ENCODE measurements at regions of chr18 and their contacts with region 1.

Region 1: DNA sequence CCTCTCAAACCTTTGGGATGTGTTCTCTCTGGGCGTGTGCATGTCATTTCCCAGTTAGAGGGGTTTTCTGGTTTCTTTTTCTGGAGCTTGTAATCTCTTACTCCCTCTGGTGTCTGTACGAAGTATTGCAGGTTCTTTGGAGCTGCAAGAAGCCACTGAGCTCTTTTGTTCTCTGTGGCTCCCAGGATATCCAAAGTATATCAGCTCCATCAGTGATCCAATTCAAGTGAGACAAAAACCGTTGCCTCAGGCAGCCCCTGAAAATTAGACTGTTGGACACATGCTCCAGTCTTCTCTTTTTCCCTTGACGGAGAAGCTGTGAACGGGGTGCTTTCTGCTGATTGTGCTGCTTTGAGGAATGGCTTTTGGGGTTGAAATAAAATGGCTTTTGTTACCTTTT is 59.0 kb upstream of the LDLRAD4 start:
- DNase-seq: peak in 7 of 9 donors; percentile 32 to 66 (median 56)
- ATAC-seq: peak; percentile 79
- H3K4me3 ChIP-seq: no peak overlapping the region
- H3K4me3 Mint-ChIP-seq: peak overlapping the region in 4 of 10 donors; percentile 1 to 52 (median 8)
- H3K27ac ChIP-seq: no peak overlapping the region
- H3K27ac Mint-ChIP-seq: peak overlapping the region in 1 of 9 donors; percentile 43
- H3K4me1 ChIP-seq: no peaks in the 10 kb centered on the region
- H3K4me1 Mint-ChIP-seq: peaks cover 0 to 5% (median 3%) of the 10 kb centered on the region in 7 donors
- H3K27me3 ChIP-seq: no peaks in the 10 kb centered on the region
- H3K27me3 Mint-ChIP-seq: peaks cover 0 to 18% (median 4%) of the 10 kb centered on the region in 5 donors

Region 2: DNA sequence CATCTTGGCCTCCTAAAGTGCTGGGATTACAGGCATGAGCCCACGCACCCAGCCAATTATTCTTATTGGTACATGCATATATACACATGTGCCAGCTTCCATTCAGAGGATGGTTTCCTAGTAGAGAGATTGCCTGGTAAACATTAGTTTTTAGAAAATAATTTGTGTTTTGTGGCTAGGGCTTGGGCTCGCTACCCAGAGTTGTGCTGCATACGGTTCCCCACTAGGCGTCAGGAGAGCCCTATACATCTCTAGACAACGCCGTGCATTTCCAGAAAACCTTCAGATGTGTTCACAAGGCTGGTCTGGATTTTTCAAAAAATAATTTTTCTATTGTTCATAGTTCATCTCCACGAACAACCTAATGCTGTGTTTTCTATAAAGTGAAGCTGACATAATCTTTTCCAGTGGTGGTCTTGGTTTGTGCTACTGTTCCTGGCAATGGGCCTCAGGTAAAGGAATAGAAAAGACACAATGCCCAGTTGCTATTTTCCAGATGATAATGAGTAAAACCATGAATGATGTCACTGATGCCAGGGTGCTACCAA is 767.9 kb before region 1 on chr18:
- CTCF ChIA-PET with region 1: interaction called, 10 read pairs
- POLR2A ChIA-PET with region 1: no interaction called
- intact Hi-C with region 1: loop called (anchors 1 to 2 kb)
- DNase-seq: peak in 8 of 9 donors; percentile 16 to 59 (median 44)
- ATAC-seq: peak; percentile 96
- H3K4me3 ChIP-seq: no peak overlapping the region
- H3K4me3 Mint-ChIP-seq: no peak overlapping the region
- H3K27ac ChIP-seq: no peak overlapping the region
- H3K27ac Mint-ChIP-seq: no peak overlapping the region
- H3K4me1 ChIP-seq: no peaks in the 10 kb centered on the region
- H3K4me1 Mint-ChIP-seq: peaks cover 0 to 3% (median 0%) of the 10 kb centered on the region in 7 donors
- H3K27me3 ChIP-seq: no peaks in the 10 kb centered on the region
- H3K27me3 Mint-ChIP-seq: peaks cover 0 to 9% (median 5%) of the 10 kb centered on the region in 5 donors

Region 3: DNA sequence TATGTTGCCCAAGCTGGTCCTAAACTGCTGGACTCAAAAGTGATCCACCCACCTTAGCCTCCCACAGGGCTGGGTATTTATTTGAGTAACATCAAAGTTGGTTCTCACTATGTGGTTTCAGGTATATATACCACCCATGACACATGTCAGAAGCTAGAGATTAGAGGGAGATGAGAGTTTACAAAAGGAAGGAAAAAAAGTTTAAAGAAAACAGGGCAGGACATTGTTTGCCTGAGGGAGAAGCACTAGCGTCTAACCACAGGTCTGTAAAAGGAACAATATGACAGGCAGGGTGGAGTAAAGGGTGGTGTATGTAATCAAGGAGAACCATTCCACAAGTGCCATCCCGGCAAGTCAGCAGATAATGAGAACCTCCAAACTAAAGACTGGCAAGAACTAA is 465.5 kb before region 1 on chr18:
- CTCF ChIA-PET with region 1: no interaction called
- POLR2A ChIA-PET with region 1: no interaction called
- intact Hi-C with region 1: no loop called
- DNase-seq: no peak
- ATAC-seq: no peak
- H3K4me3 ChIP-seq: no peak overlapping the region
- H3K4me3 Mint-ChIP-seq: no peak overlapping the region
- H3K27ac ChIP-seq: no peak overlapping the region
- H3K27ac Mint-ChIP-seq: peak overlapping the region in 1 of 9 donors; percentile 54
- H3K4me1 ChIP-seq: no peaks in the 10 kb centered on the region
- H3K4me1 Mint-ChIP-seq: peaks cover 0 to 29% (median 5%) of the 10 kb centered on the region in 7 donors
- H3K27me3 ChIP-seq: no peaks in the 10 kb centered on the region
- H3K27me3 Mint-ChIP-seq: no peaks in the 10 kb centered on the region

Region 4: GRCh38 chr18:12744103-12744502 is 415.5 kb before region 1 on chr18:
- CTCF ChIA-PET with region 1: interaction called, 3 read pairs
- POLR2A ChIA-PET with region 1: no interaction called
- intact Hi-C with region 1: loop called in 1 of 2 experiments (anchors 1 kb)
- DNase-seq: peak in 5 of 9 donors; percentile 13 to 38 (median 22)
- ATAC-seq: peak; percentile 68
- H3K4me3 ChIP-seq: no peak overlapping the region
- H3K4me3 Mint-ChIP-seq: no peak overlapping the region
- H3K27ac ChIP-seq: no peak overlapping the region
- H3K27ac Mint-ChIP-seq: no peak overlapping the region
- H3K4me1 ChIP-seq: no peaks in the 10 kb centered on the region
- H3K4me1 Mint-ChIP-seq: peaks cover 0 to 6% (median 5%) of the 10 kb centered on the region in 7 donors
- H3K27me3 ChIP-seq: no peaks in the 10 kb centered on the region
- H3K27me3 Mint-ChIP-seq: no peaks in the 10 kb centered on the region

Region 5: DNA sequence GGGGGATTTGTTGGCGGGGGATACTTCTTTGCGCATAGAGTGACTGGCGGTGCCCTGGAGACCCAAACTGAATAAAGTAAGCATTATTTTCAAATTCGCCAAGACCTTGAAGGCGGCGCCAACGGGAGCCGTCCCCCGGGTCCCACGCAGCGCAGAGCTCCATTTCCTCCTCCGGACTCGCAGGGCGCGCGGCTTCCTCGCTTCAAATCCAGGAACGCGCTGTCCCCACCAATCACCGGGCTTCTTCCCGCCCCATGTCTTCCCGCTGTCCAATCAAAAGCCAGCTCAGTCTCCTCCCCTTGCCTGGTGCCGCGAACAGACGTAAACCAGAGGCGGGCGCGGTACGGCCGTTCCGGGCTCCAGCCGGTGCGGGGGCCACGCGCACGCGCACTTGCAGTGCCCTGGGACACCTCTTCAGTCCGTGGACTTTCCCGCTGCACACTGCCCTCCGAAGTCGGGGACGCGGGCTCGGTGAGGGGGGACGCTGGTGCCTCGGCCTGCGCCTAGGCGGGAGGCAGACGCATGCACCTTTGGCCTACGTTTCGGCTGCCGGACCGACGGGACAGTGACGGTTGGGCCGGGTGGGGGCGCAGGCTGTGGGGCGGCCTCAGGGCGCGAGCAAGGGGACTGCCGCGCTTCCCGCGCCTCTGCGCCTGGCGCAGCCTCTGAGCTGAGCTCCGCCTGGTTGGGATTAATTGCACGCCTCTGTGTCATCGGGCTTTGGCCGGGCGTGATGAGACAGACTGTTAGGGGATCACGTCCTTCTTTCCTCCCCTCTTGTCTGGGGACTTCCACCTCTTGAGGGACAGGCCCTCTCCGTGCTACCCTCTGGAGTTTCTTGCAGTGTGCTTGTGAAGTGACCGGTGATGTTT is 168.4 kb before region 1 on chr18 and contains the start of gene CEP192:
- CTCF ChIA-PET with region 1: no interaction called
- POLR2A ChIA-PET with region 1: no interaction called
- intact Hi-C with region 1: loop called (anchors 1 to 5 kb)
- DNase-seq: peak; percentile 90 to 99 (median 97)
- ATAC-seq: peak; percentile 99
- H3K4me3 ChIP-seq: peak within 1 kb of the TSS; percentile 85
- H3K4me3 Mint-ChIP-seq: peak within 1 kb of the TSS in 9 of 10 donors; percentile 90 to 99 (median 98)
- H3K27ac ChIP-seq: peak within 1 kb of the TSS; percentile 82
- H3K27ac Mint-ChIP-seq: peak within 1 kb of the TSS; percentile 88 to 97 (median 93)
- H3K4me1 ChIP-seq: peaks cover 27 to 29% of the 10 kb centered on the region in 2 donors
- H3K4me1 Mint-ChIP-seq: peaks cover 10 to 29% (median 20%) of the 10 kb centered on the region in 7 donors
- H3K27me3 ChIP-seq: no peaks in the 10 kb centered on the region
- H3K27me3 Mint-ChIP-seq: peaks cover 0 to 1% (median 0%) of the 10 kb centered on the region in 5 donors
- total RNA-seq, gene CEP192: 30.9 to 45.0 (median 39.7) TPM

Region 6: DNA sequence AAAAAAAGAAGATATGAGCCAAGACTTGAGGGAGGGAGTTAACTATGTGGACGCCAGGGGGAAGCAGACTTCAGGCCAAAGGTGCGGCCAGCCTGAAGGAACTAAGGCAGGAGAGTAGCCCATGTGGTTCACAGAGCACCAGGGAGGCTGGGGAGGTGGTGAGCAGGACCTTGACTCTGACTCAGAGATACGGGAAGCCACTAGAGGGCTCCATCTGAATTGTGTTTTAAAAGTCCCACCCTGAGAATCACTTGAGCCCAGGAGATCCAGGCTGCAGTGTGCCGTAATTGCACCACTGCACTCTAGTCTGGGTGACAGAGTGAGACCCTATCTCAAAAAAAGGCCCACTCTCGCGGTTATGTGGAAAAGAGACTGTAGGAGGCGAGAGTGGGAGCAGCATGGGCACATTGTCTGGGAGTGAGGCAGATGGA is 156.1 kb before region 1 on chr18:
- CTCF ChIA-PET with region 1: no interaction called
- POLR2A ChIA-PET with region 1: no interaction called
- intact Hi-C with region 1: loop called in 1 of 2 experiments (anchors 1 kb)
- DNase-seq: peak in 2 of 9 donors; percentile 1 to 10
- ATAC-seq: peak; percentile 36
- H3K4me3 ChIP-seq: no peak overlapping the region
- H3K4me3 Mint-ChIP-seq: no peak overlapping the region
- H3K27ac ChIP-seq: no peak overlapping the region
- H3K27ac Mint-ChIP-seq: no peak overlapping the region
- H3K4me1 ChIP-seq: no peaks in the 10 kb centered on the region
- H3K4me1 Mint-ChIP-seq: peaks cover 4 to 32% (median 19%) of the 10 kb centered on the region in 7 donors
- H3K27me3 ChIP-seq: no peaks in the 10 kb centered on the region
- H3K27me3 Mint-ChIP-seq: no peaks in the 10 kb centered on the region

Region 7: DNA sequence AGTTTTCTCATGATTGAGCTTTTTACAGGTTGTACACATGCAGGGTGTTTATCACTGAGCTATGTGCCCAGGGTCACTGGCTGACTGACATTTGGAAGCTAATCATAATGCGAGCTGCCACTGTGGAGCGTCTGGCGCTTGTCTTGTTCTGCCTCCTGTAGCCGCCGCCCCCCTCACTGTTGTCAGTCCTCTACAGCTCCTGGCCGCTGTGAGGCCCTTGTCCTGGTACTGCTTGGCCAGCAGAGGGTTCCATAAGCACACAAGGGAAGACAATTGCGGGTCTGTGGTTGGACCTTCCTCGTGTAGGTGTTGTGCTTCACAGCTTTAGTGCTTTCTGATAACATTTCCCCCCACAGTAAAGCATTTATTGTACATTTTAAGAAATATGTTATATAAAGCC is 46.6 kb before region 1 on chr18:
- CTCF ChIA-PET with region 1: interaction called, 5 read pairs
- POLR2A ChIA-PET with region 1: no interaction called
- intact Hi-C with region 1: loop called in 1 of 2 experiments (anchors 1 kb)
- DNase-seq: no peak
- ATAC-seq: no peak
- H3K4me3 ChIP-seq: no peak overlapping the region
- H3K4me3 Mint-ChIP-seq: no peak overlapping the region
- H3K27ac ChIP-seq: no peak overlapping the region
- H3K27ac Mint-ChIP-seq: no peak overlapping the region
- H3K4me1 ChIP-seq: no peaks in the 10 kb centered on the region
- H3K4me1 Mint-ChIP-seq: no peaks in the 10 kb centered on the region
- H3K27me3 ChIP-seq: no peaks in the 10 kb centered on the region
- H3K27me3 Mint-ChIP-seq: no peaks in the 10 kb centered on the region

Measured in naive thymus-derived CD4-positive, alpha-beta T cell (primary cell).